Caco-2 (cell line): ENCODE measurements at regions of chr4 and their contacts with region 1.

Region 1: DNA sequence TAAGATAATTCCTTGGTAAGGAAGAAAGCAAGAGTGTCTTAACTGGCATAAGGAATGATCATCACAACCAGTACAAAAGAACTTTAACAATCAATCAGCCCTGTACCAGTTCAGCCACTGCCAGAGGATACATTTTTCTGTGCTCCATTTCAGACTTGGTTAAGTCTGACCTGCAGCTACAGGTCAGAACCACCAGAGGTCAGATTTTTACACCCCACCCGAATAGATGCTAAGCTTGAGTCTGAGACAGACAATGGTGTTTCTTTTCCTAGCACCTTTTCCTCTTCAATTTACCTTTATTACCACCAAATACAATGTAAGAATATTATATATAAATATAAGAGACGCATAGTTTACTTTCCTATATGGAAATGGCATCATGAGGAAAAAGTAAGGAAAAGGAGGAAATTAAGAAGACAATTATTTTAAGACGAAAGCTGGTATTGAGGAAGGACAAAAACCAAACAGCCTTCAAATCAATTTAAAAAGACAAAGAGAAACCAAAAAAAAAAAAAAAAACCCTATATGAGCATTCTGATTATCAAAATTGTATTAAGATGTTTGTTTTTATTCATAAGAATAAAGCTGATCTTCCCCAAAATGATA is 215.3 kb upstream of the TTC29 start:
- DNase-seq: peak; percentile 38 to 40
- H3K4me3 ChIP-seq: no peak overlapping the region
- H3K4me3 Mint-ChIP-seq: no peak overlapping the region
- H3K27ac Mint-ChIP-seq: no peak overlapping the region
- H3K4me1 ChIP-seq: no peaks in the 10 kb centered on the region
- H3K4me1 Mint-ChIP-seq: no peaks in the 10 kb centered on the region
- H3K27me3 ChIP-seq: no peaks in the 10 kb centered on the region
- H3K27me3 Mint-ChIP-seq: no peaks in the 10 kb centered on the region
- CTCF ChIP-seq: peak; percentile 70 to 80

Region 2: DNA sequence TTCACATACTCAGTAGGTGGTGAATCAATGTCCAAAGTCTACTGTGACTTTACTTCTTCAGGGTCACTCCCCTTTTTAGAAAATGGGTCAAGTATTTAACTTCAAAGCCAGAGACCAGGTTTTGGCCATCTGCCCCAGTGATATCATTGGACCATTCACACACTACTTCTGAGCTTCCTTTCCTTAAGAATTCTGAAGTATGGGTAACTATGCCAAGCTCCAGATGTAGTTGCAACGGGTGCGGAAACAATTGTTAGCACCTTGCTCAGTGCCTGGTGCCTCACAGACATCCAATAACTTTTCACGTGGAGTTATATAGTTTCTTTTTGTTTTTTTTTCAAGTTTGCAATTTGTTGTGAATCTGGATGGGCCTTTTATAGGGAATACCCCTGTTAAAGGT is 277.9 kb before region 1 on chr4:
- CTCF ChIA-PET with region 1: no interaction called
- POLR2A ChIA-PET with region 1: no interaction called
- intact Hi-C with region 1: no loop called
- DNase-seq: no peak
- H3K4me3 ChIP-seq: no peak overlapping the region
- H3K4me3 Mint-ChIP-seq: no peak overlapping the region
- H3K27ac Mint-ChIP-seq: no peak overlapping the region
- H3K4me1 ChIP-seq: no peaks in the 10 kb centered on the region
- H3K4me1 Mint-ChIP-seq: peaks cover 3% of the 10 kb centered on the region
- H3K27me3 ChIP-seq: no peaks in the 10 kb centered on the region
- H3K27me3 Mint-ChIP-seq: peaks cover 6% of the 10 kb centered on the region
- CTCF ChIP-seq: no peak

Region 3: GRCh38 chr4:147019061-147019460 is 141.9 kb before region 1 on chr4:
- CTCF ChIA-PET with region 1: no interaction called
- POLR2A ChIA-PET with region 1: no interaction called
- intact Hi-C with region 1: no loop called
- DNase-seq: peak; percentile 70 to 74
- H3K4me3 ChIP-seq: no peak overlapping the region
- H3K4me3 Mint-ChIP-seq: no peak overlapping the region
- H3K27ac Mint-ChIP-seq: no peak overlapping the region
- H3K4me1 ChIP-seq: no peaks in the 10 kb centered on the region
- H3K4me1 Mint-ChIP-seq: no peaks in the 10 kb centered on the region
- H3K27me3 ChIP-seq: no peaks in the 10 kb centered on the region
- H3K27me3 Mint-ChIP-seq: peaks cover 21% of the 10 kb centered on the region
- CTCF ChIP-seq: peak; percentile 76 to 77

Region 4: GRCh38 chr4:147123146-147123545 is 37.9 kb before region 1 on chr4:
- CTCF ChIA-PET with region 1: no interaction called
- POLR2A ChIA-PET with region 1: no interaction called
- intact Hi-C with region 1: no loop called
- DNase-seq: no peak
- H3K4me3 ChIP-seq: no peak overlapping the region
- H3K4me3 Mint-ChIP-seq: no peak overlapping the region
- H3K27ac Mint-ChIP-seq: no peak overlapping the region
- H3K4me1 ChIP-seq: no peaks in the 10 kb centered on the region
- H3K4me1 Mint-ChIP-seq: no peaks in the 10 kb centered on the region
- H3K27me3 ChIP-seq: no peaks in the 10 kb centered on the region
- H3K27me3 Mint-ChIP-seq: peaks cover 6% of the 10 kb centered on the region
- CTCF ChIP-seq: no peak

Region 5: GRCh38 chr4:147136310-147136709 is 24.7 kb before region 1 on chr4:
- CTCF ChIA-PET with region 1: no interaction called
- POLR2A ChIA-PET with region 1: no interaction called
- intact Hi-C with region 1: no loop called
- DNase-seq: no peak
- H3K4me3 ChIP-seq: no peak overlapping the region
- H3K4me3 Mint-ChIP-seq: no peak overlapping the region
- H3K27ac Mint-ChIP-seq: no peak overlapping the region
- H3K4me1 ChIP-seq: no peaks in the 10 kb centered on the region
- H3K4me1 Mint-ChIP-seq: no peaks in the 10 kb centered on the region
- H3K27me3 ChIP-seq: no peaks in the 10 kb centered on the region
- H3K27me3 Mint-ChIP-seq: peaks cover 9% of the 10 kb centered on the region
- CTCF ChIP-seq: no peak

Region 6: DNA sequence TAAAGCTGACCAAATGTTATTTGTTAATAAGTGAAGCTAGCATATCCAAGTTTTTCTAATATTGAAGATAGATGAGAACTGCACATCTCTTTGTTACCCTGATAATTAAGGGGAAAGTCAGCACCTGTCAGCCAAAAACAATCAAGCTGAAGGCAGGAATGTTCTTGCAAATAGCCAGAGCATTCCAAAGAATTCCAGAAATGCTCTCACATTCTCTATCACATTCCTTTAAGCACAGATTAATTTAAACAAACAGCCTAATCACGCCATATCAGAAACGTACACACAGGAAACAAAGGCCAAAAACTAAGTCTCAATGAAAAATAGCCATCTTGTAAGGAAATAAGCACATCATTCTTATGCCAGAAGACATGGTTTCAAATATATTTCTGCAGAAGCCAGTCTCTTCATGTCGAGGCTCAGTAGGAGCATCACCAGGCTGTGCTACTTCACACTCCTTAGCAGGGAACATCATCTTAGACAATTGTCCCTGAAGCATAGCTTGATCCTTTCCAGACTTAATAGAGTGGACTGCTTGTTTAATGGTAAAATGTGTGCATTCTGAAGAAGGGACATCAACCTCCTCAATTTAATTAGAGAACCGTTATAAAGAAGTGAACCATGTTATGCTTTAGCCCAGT is 37.5 kb after region 1 on chr4:
- CTCF ChIA-PET with region 1: no interaction called
- POLR2A ChIA-PET with region 1: no interaction called
- intact Hi-C with region 1: loop called (anchors 2 kb)
- DNase-seq: peak in 1 of 2 experiments; percentile 4
- H3K4me3 ChIP-seq: no peak overlapping the region
- H3K4me3 Mint-ChIP-seq: peak overlapping the region; percentile 24
- H3K27ac Mint-ChIP-seq: peak overlapping the region; percentile 20
- H3K4me1 ChIP-seq: peaks cover 27% of the 10 kb centered on the region
- H3K4me1 Mint-ChIP-seq: peaks cover 27% of the 10 kb centered on the region
- H3K27me3 ChIP-seq: no peaks in the 10 kb centered on the region
- H3K27me3 Mint-ChIP-seq: no peaks in the 10 kb centered on the region
- CTCF ChIP-seq: no peak

Region 7: GRCh38 chr4:147378779-147379178 is 217.8 kb after region 1 on chr4:
- CTCF ChIA-PET with region 1: interaction called, 5 read pairs
- POLR2A ChIA-PET with region 1: no interaction called
- intact Hi-C with region 1: loop called (anchors 1 kb)
- DNase-seq: peak in 1 of 2 experiments; percentile 4
- H3K4me3 ChIP-seq: no peak overlapping the region
- H3K4me3 Mint-ChIP-seq: no peak overlapping the region
- H3K27ac Mint-ChIP-seq: no peak overlapping the region
- H3K4me1 ChIP-seq: no peaks in the 10 kb centered on the region
- H3K4me1 Mint-ChIP-seq: no peaks in the 10 kb centered on the region
- H3K27me3 ChIP-seq: no peaks in the 10 kb centered on the region
- H3K27me3 Mint-ChIP-seq: peaks cover 5% of the 10 kb centered on the region
- CTCF ChIP-seq: peak; percentile 11 to 16

Region 8: GRCh38 chr4:147518846-147519767 is 358.1 kb after region 1 on chr4:
- CTCF ChIA-PET with region 1: interaction called, 6 read pairs
- POLR2A ChIA-PET with region 1: no interaction called
- intact Hi-C with region 1: loop called (anchors 5 kb)
- DNase-seq: peak; percentile 64 to 65
- H3K4me3 ChIP-seq: no peak overlapping the region
- H3K4me3 Mint-ChIP-seq: no peak overlapping the region
- H3K27ac Mint-ChIP-seq: no peak overlapping the region
- H3K4me1 ChIP-seq: no peaks in the 10 kb centered on the region
- H3K4me1 Mint-ChIP-seq: no peaks in the 10 kb centered on the region
- H3K27me3 ChIP-seq: no peaks in the 10 kb centered on the region
- H3K27me3 Mint-ChIP-seq: no peaks in the 10 kb centered on the region
- CTCF ChIP-seq: peak; percentile 86 to 87

Region 9: DNA sequence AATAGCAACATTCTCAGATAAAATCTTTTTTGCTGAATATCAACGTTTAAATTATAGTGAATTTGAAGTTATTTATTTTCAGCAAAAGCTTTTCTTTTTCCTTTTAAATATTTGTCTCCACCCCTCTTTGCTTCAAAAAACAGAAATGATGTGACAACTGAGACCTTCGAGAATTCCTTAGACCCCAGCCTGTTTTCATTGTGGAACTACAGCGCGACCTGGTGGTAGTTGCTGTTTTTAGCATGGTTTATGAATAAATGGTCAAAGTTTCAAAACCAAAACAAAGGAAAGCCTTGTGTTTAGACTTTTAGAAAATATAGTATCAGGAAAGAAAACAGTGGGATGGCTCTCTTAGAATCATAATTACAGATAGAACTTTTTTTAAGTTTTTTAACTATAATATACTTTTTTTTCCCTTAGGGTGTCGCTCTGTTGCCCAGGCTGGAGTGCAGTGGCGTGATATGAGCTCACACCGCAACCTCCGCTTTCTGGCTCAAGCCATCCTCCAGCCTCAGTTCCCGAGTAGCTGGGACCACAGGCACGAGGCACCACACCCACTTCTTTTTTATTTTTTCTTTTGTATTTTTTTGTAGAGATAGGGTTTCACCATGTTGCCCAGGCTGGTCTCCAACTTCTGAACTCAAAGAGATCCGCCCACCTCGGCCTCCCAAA is 429.4 kb after region 1 on chr4:
- CTCF ChIA-PET with region 1: interaction called, 4 read pairs
- POLR2A ChIA-PET with region 1: no interaction called
- intact Hi-C with region 1: loop called (anchors 1 kb)
- DNase-seq: peak; percentile 40 to 65
- H3K4me3 ChIP-seq: no peak overlapping the region
- H3K4me3 Mint-ChIP-seq: no peak overlapping the region
- H3K27ac Mint-ChIP-seq: no peak overlapping the region
- H3K4me1 ChIP-seq: no peaks in the 10 kb centered on the region
- H3K4me1 Mint-ChIP-seq: no peaks in the 10 kb centered on the region
- H3K27me3 ChIP-seq: no peaks in the 10 kb centered on the region
- H3K27me3 Mint-ChIP-seq: no peaks in the 10 kb centered on the region
- CTCF ChIP-seq: peak; percentile 72 to 74